ENCODE measurements at regions of chr9 and their contacts with region 1.

Region 1: GRCh38 chr9:34546834-34547827 is 24.3 kb upstream of the ENHO start:
- DNase-seq: peak; percentile 61 to 67
- H3K4me3 ChIP-seq: no peak overlapping the region
- H3K4me3 Mint-ChIP-seq: no peak overlapping the region
- H3K27ac Mint-ChIP-seq: no peak overlapping the region
- H3K4me1 ChIP-seq: no peaks in the 10 kb centered on the region
- H3K4me1 Mint-ChIP-seq: no peaks in the 10 kb centered on the region
- H3K27me3 ChIP-seq: no peaks in the 10 kb centered on the region
- H3K27me3 Mint-ChIP-seq: peaks cover 13% of the 10 kb centered on the region
- CTCF ChIP-seq: peak; percentile 58 to 60

Region 2: GRCh38 chr9:34403554-34404380 is 143.4 kb before region 1 on chr9:
- CTCF ChIA-PET with region 1: interaction called, 15 read pairs
- POLR2A ChIA-PET with region 1: no interaction called
- intact Hi-C with region 1: loop called (anchors 2 kb)
- DNase-seq: peak; percentile 78 to 83
- H3K4me3 ChIP-seq: no peak overlapping the region
- H3K4me3 Mint-ChIP-seq: no peak overlapping the region
- H3K27ac Mint-ChIP-seq: no peak overlapping the region
- H3K4me1 ChIP-seq: no peaks in the 10 kb centered on the region
- H3K4me1 Mint-ChIP-seq: no peaks in the 10 kb centered on the region
- H3K27me3 ChIP-seq: no peaks in the 10 kb centered on the region
- H3K27me3 Mint-ChIP-seq: no peaks in the 10 kb centered on the region
- CTCF ChIP-seq: peak; percentile 96

Region 3: GRCh38 chr9:34437006-34437925 is 109.9 kb before region 1 on chr9:
- CTCF ChIA-PET with region 1: no interaction called
- POLR2A ChIA-PET with region 1: no interaction called
- intact Hi-C with region 1: loop called (anchors 1 kb)
- DNase-seq: peak; percentile 54 to 65
- H3K4me3 ChIP-seq: no peak overlapping the region
- H3K4me3 Mint-ChIP-seq: no peak overlapping the region
- H3K27ac Mint-ChIP-seq: no peak overlapping the region
- H3K4me1 ChIP-seq: no peaks in the 10 kb centered on the region
- H3K4me1 Mint-ChIP-seq: no peaks in the 10 kb centered on the region
- H3K27me3 ChIP-seq: no peaks in the 10 kb centered on the region
- H3K27me3 Mint-ChIP-seq: no peaks in the 10 kb centered on the region
- CTCF ChIP-seq: peak; percentile 67 to 69

Measured in Caco-2 (cell line).